H1 (cell line): ENCODE measurements at regions of chr22 and their contacts with region 1.

Region 1: GRCh38 chr22:34111210-34111824 is 191.0 kb upstream of the LARGE1 start:
- DNase-seq: peak in 1 of 2 experiments; percentile 59
- H3K4me3 ChIP-seq: no peak overlapping the region
- H3K27ac ChIP-seq: no peak overlapping the region
- H3K4me1 ChIP-seq: no peaks in the 10 kb centered on the region
- H3K27me3 ChIP-seq: no peaks in the 10 kb centered on the region
- CTCF ChIP-seq: peak; percentile 67 to 84 (median 69)
- EP300 ChIP-seq: no peak
- POLR2A ChIP-seq: no peak
- RAD21 ChIP-seq: peak; percentile 67 to 69

Region 2: GRCh38 chr22:34122042-34122441 is 10.7 kb after region 1 on chr22:
- CTCF ChIA-PET with region 1: interaction called, 17 read pairs
- POLR2A ChIA-PET with region 1: no interaction called
- DNase-seq: no peak
- H3K4me3 ChIP-seq: no peak overlapping the region
- H3K27ac ChIP-seq: no peak overlapping the region
- H3K4me1 ChIP-seq: no peaks in the 10 kb centered on the region
- H3K27me3 ChIP-seq: no peaks in the 10 kb centered on the region; a peak in 1 of 7 replicates
- CTCF ChIP-seq: no peak
- EP300 ChIP-seq: no peak
- POLR2A ChIP-seq: no peak
- RAD21 ChIP-seq: no peak

Region 3: DNA sequence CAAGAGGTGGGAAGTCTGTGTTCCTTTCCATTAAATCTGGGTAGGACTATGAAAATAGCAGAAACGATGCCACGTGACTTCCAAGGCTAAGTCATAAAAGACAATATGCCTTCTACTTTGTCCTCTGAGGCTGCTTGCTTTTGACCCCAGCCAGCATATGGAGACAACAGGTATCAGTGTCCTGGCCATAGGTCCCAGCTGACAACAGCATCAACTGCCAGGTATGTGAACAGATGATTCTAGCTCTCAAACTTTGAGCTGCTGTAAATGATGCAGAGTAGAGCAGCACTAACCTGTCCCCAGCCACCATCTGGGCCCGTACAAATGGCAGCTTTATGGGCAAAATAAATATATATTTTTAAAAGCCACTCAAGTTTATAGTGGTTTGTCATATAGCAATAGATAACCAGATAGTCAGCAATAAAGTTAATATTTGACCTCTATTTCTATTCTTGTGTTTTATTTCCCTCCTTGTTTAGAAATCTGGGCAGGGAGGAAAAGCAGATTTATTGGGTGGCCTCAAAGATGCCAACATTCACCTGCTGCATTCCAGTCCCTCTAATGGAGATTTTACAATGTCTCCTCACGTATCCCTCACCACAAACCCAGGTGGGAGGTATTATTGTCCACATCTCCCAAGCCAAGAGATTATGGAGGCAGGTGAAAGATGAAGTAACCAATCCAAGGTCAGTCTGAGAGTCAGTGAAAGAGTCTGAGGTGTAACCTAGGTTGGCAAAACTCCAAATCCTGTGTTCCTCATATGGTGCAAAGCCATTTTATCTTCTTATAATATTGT is 18.6 kb after region 1 on chr22:
- CTCF ChIA-PET with region 1: interaction called, 22 read pairs
- POLR2A ChIA-PET with region 1: no interaction called
- DNase-seq: no peak
- H3K4me3 ChIP-seq: no peak overlapping the region
- H3K27ac ChIP-seq: no peak overlapping the region
- H3K4me1 ChIP-seq: no peaks in the 10 kb centered on the region
- H3K27me3 ChIP-seq: no peaks in the 10 kb centered on the region; a peak in 2 of 7 replicates
- CTCF ChIP-seq: no peak
- EP300 ChIP-seq: no peak
- POLR2A ChIP-seq: no peak
- RAD21 ChIP-seq: no peak

Region 4: DNA sequence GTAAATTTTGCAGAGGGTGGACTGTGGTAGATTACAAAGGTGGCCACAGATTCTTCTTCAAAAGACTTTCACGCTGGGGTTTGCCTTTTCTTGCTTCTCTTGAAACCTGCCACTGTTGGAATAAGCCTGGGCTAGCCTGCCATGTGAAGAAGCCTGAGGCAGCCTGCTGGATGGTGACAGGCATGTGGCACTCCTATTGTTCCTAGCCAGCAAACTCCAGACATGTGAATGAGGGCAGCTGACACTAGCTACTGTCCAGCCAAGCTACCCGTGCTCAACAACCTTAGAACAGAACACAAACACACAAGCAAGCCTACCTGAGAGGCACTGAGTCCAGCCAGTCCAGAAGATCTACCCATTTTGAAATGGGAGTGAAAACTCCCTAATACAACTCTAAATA is 131.7 kb after region 1 on chr22:
- CTCF ChIA-PET with region 1: no interaction called
- POLR2A ChIA-PET with region 1: no interaction called
- DNase-seq: no peak
- H3K4me3 ChIP-seq: no peak overlapping the region
- H3K27ac ChIP-seq: no peak overlapping the region
- H3K4me1 ChIP-seq: no peaks in the 10 kb centered on the region
- H3K27me3 ChIP-seq: no peaks in the 10 kb centered on the region
- CTCF ChIP-seq: no peak
- EP300 ChIP-seq: no peak
- POLR2A ChIP-seq: no peak
- RAD21 ChIP-seq: no peak